IMR-90 (cell line): ENCODE measurements at regions of chr3 and their contacts with region 1.

Region 1: DNA sequence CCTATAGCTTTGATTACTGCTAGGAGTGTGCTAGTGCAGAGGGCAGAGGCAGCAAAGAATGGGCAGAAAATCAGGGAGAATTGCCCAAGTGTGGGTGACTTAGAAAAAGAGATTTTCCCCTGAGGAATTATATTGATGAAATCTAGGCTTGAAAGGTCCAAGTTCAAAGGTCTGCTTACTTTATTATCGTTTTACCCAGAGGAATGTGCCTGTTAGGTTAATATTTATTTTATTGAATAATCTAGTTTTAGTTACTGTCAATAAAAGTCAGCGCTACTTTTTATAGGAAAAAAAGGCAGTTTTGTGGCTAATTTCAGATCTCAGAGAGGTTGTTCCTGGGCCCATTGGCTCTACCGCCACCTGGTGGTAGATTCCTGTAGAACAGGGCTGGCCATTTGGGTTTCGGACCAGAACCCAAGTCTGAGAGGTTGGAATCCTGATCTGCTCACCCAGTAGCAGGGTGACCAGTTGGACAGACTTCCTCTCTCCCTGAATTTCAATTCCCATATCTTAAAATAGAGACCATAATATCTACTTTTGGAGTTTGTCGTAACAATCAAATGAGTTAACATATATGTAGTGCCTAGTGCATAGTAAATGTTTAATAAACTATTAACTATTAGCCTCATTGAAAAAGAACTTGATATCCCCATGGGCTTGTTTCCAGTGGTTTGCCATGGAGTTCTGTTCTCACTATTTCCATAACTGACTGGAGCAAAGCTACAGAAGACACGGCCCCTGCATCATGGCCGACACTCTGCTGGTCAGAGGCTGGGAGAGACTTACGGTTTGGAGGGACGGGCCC is 62.7 kb upstream of the ZNF148 start:
- DNase-seq: peak; percentile 39
- ATAC-seq: peak; percentile 89
- H3K4me3 ChIP-seq: no peak overlapping the region
- H3K27ac ChIP-seq: no peak overlapping the region
- H3K4me1 ChIP-seq: peaks cover 5% of the 10 kb centered on the region; the same call in 1 of the 2 replicates
- H3K27me3 ChIP-seq: no peaks in the 10 kb centered on the region
- CTCF ChIP-seq: peak; percentile 91
- POLR2A ChIP-seq: no peak
- RAD21 ChIP-seq: peak; percentile 93

Region 2: GRCh38 chr3:124761250-124761796 is 676.5 kb before region 1 on chr3:
- CTCF ChIA-PET with region 1: no interaction called
- POLR2A ChIA-PET with region 1: no interaction called
- dilution Hi-C with region 1: no loop called
- in situ Hi-C with region 1: loop called (anchors 10 kb)
- intact Hi-C with region 1: loop called (anchors 5 kb)
- DNase-seq: peak; percentile 89
- ATAC-seq: peak; percentile 85
- H3K4me3 ChIP-seq: no peak overlapping the region
- H3K27ac ChIP-seq: no peak overlapping the region
- H3K4me1 ChIP-seq: peaks cover 7% of the 10 kb centered on the region
- H3K27me3 ChIP-seq: no peaks in the 10 kb centered on the region
- CTCF ChIP-seq: peak; percentile 96
- POLR2A ChIP-seq: peak; percentile 39; the same call in 1 of the 2 replicates
- RAD21 ChIP-seq: peak; percentile 98

Region 3: GRCh38 chr3:124928333-124929202 is 509.3 kb before region 1 on chr3:
- CTCF ChIA-PET with region 1: no interaction called
- POLR2A ChIA-PET with region 1: no interaction called
- dilution Hi-C with region 1: no loop called
- in situ Hi-C with region 1: no loop called
- intact Hi-C with region 1: loop called (anchors 5 kb)
- DNase-seq: peak; percentile 74
- ATAC-seq: peak; percentile 80
- H3K4me3 ChIP-seq: no peak overlapping the region
- H3K27ac ChIP-seq: no peak overlapping the region
- H3K4me1 ChIP-seq: peaks cover 2% of the 10 kb centered on the region; the same call in 1 of the 2 replicates
- H3K27me3 ChIP-seq: peaks cover 13% of the 10 kb centered on the region
- CTCF ChIP-seq: peak; percentile 79
- POLR2A ChIP-seq: no peak
- RAD21 ChIP-seq: peak; percentile 78

Region 4: DNA sequence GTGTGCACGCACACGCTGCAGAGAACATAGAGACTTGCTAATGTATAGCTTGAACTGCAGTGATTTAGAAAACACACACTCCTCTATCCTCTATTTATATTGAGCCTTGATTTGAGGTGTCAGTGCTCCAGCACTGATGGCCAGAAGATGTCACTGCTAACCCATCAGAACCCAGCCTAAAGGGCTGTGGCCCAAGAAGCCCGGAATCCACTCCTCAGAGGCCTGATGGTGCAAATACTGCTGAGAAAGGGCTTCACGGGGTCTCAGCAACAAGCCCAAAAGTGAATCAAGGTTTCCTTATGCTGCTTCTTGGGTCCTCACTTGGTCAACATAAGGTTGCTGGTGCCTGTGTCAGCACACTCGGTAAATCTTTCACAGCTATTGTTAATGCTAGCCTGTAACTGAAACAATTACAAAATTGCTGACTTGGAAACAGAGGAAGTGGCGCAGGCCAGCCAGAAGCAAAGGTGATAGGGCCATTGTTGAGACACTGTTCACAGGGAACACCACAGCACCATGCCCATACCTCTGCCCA is 442.3 kb before region 1 on chr3:
- CTCF ChIA-PET with region 1: no interaction called
- POLR2A ChIA-PET with region 1: no interaction called
- dilution Hi-C with region 1: no loop called
- in situ Hi-C with region 1: loop called (anchors 10 kb)
- intact Hi-C with region 1: loop called (anchors 5 kb)
- DNase-seq: peak; percentile 48
- ATAC-seq: peak; percentile 67
- H3K4me3 ChIP-seq: no peak overlapping the region
- H3K27ac ChIP-seq: no peak overlapping the region
- H3K4me1 ChIP-seq: peaks cover 4% of the 10 kb centered on the region; the same call in 1 of the 2 replicates
- H3K27me3 ChIP-seq: no peaks in the 10 kb centered on the region
- CTCF ChIP-seq: peak; percentile 45
- POLR2A ChIP-seq: no peak
- RAD21 ChIP-seq: peak; percentile 68

Region 5: GRCh38 chr3:125045965-125046364 is 391.9 kb before region 1 on chr3:
- CTCF ChIA-PET with region 1: no interaction called
- POLR2A ChIA-PET with region 1: no interaction called
- dilution Hi-C with region 1: no loop called
- in situ Hi-C with region 1: loop called (anchors 10 kb)
- intact Hi-C with region 1: loop called (anchors 2 kb)
- DNase-seq: peak; percentile 87
- ATAC-seq: peak; percentile 89
- H3K4me3 ChIP-seq: no peak overlapping the region
- H3K27ac ChIP-seq: no peak overlapping the region
- H3K4me1 ChIP-seq: peaks cover 38% of the 10 kb centered on the region
- H3K27me3 ChIP-seq: no peaks in the 10 kb centered on the region
- CTCF ChIP-seq: peak; percentile 45
- POLR2A ChIP-seq: no peak
- RAD21 ChIP-seq: peak; percentile 60

Region 6: GRCh38 chr3:125231895-125232294 is 205.9 kb before region 1 on chr3:
- CTCF ChIA-PET with region 1: no interaction called
- POLR2A ChIA-PET with region 1: no interaction called
- dilution Hi-C with region 1: no loop called
- in situ Hi-C with region 1: no loop called
- intact Hi-C with region 1: loop called (anchors 10 kb)
- DNase-seq: peak; percentile 87
- ATAC-seq: peak; percentile 92
- H3K4me3 ChIP-seq: no peak overlapping the region
- H3K27ac ChIP-seq: no peak overlapping the region
- H3K4me1 ChIP-seq: peaks cover 7% of the 10 kb centered on the region
- H3K27me3 ChIP-seq: no peaks in the 10 kb centered on the region
- CTCF ChIP-seq: no peak
- POLR2A ChIP-seq: no peak
- RAD21 ChIP-seq: no peak

Region 7: DNA sequence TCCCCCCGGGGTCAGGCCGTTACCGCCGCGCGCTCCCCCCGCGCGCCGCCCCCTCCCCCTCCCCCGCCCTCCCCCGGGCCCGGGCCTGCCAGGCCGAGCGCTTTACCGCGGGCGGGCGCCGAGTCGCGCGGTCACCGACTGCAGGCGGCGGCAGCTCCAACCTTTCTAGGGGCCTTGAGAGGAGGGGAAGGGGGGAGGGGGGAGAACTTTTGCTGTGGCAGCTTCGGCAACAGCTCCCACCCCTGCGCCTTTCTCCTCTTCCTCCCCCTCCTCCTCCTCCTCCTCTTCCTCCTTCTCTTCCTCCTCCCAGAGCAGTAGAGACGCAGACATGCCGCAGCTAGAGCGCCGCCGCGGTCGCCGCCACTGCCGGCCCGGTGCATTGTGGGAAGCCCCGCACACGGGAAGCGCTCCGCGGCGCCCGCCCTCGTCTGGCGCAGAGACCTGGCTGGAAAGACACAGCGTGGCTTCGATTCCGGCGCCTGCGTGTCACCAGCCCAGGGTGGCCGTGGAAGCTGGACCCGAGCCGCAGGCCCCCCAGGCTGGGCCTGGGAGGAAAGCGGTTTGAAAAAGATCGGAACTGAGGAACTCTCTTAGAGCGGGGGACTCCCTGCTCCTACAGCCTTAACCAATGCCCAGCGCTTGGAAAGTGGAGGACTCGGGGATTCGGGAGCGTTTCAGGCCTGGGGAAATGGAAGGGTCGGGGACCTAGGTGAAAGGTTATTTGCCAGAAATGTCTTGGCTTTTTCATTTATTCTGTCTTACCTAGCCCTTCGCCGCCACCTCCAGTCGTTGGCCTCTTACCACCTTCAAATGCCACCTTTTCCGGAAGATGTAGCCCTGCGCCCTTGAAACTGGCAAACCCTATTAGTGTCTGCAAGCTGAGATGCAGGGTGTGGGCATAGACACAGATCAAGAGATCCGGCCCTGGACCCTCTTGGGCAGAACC is 62.6 kb before region 1 on chr3 and contains the start of gene ZNF148:
- CTCF ChIA-PET with region 1: no interaction called
- POLR2A ChIA-PET with region 1: no interaction called
- dilution Hi-C with region 1: no loop called
- in situ Hi-C with region 1: no loop called
- intact Hi-C with region 1: loop called (anchors 2 kb)
- DNase-seq: peak; percentile 84
- ATAC-seq: peak; percentile 95
- H3K4me3 ChIP-seq: peak within 1 kb of the TSS; percentile 98
- H3K27ac ChIP-seq: peak within 1 kb of the TSS; percentile 99
- H3K4me1 ChIP-seq: peaks cover 5% of the 10 kb centered on the region
- H3K27me3 ChIP-seq: no peaks in the 10 kb centered on the region
- CTCF ChIP-seq: 0 out of 2 replicates have a peak, but pooled peaks have one; percentile 11
- POLR2A ChIP-seq: peak; percentile 84
- RAD21 ChIP-seq: no peak
- total RNA-seq, gene ZNF148: 57.8 and 65.2 TPM in 2 replicates